Psoas muscle (tissue), 8 donors: ENCODE measurements at regions of chr9 and their contacts with region 1.

Region 1: DNA sequence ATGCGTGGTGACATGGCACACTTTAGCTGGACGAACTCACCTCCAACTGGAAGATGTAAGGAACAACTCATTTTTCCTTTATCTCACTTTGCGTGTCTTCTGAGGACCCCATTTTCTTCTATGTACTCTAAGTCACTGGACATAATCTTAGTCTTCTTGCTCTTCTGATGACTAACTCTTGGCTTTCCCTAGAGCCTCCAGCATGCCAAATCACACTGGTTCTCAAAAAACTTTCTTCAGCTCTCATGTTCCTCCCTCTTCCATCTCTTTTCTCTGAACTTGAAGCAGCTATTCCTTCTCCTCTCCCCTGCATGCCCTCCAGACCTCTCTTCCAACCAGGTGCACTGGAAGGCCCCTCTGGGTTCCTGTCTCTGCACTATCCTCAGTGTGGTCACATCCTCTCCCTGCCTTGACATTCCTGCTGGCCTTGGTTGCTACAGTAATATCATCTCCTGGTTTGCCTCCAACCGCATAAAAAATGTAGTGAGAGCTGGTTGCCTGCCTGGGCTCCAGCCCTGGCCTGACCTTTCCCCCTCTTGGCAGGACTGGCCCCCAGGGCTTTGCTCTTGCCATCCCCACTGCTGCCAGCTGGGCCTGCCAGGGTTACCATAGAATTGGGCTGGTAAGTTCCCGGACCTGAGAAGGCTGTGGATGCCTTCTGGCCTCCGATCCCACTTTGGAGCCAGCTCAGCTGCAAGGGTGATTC is 44.8 kb upstream of the BNC2 start:
- DNase-seq: peak; percentile 24 to 55
- ATAC-seq: peak in 3 of 4 donors; percentile 17 to 69 (median 57)
- H3K4me3 ChIP-seq: no peak overlapping the region
- H3K27ac ChIP-seq: no peak overlapping the region
- H3K4me1 ChIP-seq: no peaks in the 10 kb centered on the region
- H3K27me3 ChIP-seq: no peaks in the 10 kb centered on the region
- CTCF ChIP-seq: no peak

Region 2: DNA sequence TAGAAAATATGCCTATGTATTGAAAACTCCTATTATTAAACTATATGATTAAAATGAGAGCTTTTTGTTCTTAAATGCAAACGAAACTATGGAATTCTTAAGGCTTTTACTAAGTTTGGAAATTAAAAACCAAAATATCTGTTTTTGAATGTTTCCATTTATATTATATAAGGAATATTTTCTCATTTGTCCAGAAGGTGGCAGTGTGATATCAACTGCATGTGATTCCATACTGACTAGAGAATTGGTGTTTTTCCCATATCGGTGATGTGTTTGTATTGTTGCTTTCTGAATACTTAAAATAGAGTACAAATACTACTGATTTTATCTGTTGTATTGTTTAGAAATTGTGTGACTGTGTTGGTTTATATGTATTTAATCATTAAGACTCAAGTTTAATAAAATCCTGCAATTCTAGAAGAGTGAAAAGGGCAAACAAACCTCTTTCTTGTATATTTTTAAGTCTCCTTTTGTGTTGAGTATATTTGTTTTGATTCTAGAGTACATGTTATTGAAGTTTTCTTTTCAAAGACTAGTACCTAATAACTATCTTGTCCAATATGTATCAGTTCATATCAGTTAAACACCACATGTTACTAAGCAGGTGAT is 1041.6 kb before region 1 on chr9:
- intact Hi-C with region 1: loop called in 1 of 2 experiments (anchors 10 kb)
- DNase-seq: no peak
- ATAC-seq: peak in 1 of 4 donors; percentile 63
- H3K4me3 ChIP-seq: no peak overlapping the region
- H3K27ac ChIP-seq: no peak overlapping the region
- H3K4me1 ChIP-seq: no peaks in the 10 kb centered on the region
- H3K27me3 ChIP-seq: no peaks in the 10 kb centered on the region
- CTCF ChIP-seq: peak; percentile 68

Region 3: DNA sequence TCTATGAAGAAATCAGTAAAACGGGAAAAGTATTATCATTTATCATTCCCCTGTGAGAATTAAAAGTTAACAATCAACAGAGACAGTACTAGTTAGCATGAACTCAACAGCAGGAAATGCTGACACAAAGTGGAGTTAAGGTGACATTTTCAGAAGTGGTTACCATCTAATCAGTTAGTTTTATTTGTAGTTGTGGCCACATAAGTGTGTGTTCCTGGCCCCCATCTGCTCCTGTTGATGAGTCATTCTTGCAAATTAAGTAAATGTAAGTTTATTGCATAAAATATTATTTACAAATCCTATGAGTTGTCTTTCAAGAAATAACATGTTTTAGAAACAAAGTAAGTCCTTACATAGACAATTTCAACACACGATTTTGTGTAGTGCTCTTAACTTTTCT is 35.9 kb before region 1 on chr9:
- intact Hi-C with region 1: loop called in 1 of 2 experiments (anchors 5 kb)
- DNase-seq: no peak
- ATAC-seq: no peak
- H3K4me3 ChIP-seq: no peak overlapping the region
- H3K27ac ChIP-seq: no peak overlapping the region
- H3K4me1 ChIP-seq: no peaks in the 10 kb centered on the region
- H3K27me3 ChIP-seq: peaks cover 0 to 2% (median 0%) of the 10 kb centered on the region in 3 donors
- CTCF ChIP-seq: no peak